ENCODE measurements at regions of chr11 and their contacts with region 1.

Region 1: DNA sequence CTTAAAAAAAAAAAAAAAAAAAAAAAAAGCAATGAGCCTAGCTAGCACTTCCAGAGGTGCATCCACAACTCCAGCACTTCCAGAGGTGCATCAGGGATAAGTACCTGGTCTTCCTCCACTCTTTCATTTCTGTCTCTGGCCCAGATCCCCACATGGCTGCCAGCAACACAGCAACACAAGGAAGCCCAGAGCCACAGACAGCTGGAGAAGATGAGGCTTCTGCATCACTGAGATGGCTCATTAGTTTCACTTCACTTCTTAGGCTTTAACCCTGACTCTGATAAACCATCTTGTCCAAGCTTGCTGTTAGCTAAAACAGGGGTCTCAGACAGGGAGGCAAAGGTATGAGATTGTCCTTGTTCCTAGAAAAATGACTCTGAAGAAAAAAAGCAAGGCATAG is 35.6 kb downstream of the PC start:
- DNase-seq: no peak
- H3K4me3 ChIP-seq: no peak overlapping the region
- H3K27me3 ChIP-seq: no peaks in the 10 kb centered on the region
- CTCF ChIP-seq: no peak

Region 2: GRCh38 chr11:66762088-66762487 is 160.5 kb before region 1 on chr11:
- CTCF ChIA-PET with region 1: no interaction called
- POLR2A ChIA-PET with region 1: interaction called, 17 read pairs
- DNase-seq: no peak
- H3K4me3 ChIP-seq: no peak overlapping the region
- H3K27me3 ChIP-seq: no peaks in the 10 kb centered on the region
- CTCF ChIP-seq: no peak

Region 3: GRCh38 chr11:66891851-66892660 is 30.5 kb before region 1 on chr11:
- CTCF ChIA-PET with region 1: no interaction called
- POLR2A ChIA-PET with region 1: no interaction called
- DNase-seq: peak; percentile 82
- H3K4me3 ChIP-seq: no peak overlapping the region
- H3K27me3 ChIP-seq: no peaks in the 10 kb centered on the region
- CTCF ChIP-seq: no peak